Activated CD8-positive, alpha-beta T cell treated with anti-CD3 and anti-CD28 coated beads for 36 hours (primary cell): ENCODE measurements at regions of chr19 and their contacts with region 1.

Region 1: GRCh38 chr19:8462571-8462970 is 17.8 kb downstream of the HNRNPM start:
- DNase-seq: no peak
- ATAC-seq: no peak
- H3K4me3 Mint-ChIP-seq: no peak overlapping the region
- H3K27ac Mint-ChIP-seq: peak overlapping the region; percentile 11
- H3K4me1 Mint-ChIP-seq: peaks cover 39% of the 10 kb centered on the region
- H3K27me3 Mint-ChIP-seq: no peaks in the 10 kb centered on the region
- CTCF ChIP-seq: no peak

Region 2: GRCh38 chr19:8334458-8335342 is 127.9 kb before region 1 on chr19:
- CTCF ChIA-PET with region 1: no interaction called
- POLR2A ChIA-PET with region 1: no interaction called
- intact Hi-C with region 1: no loop called
- DNase-seq: peak; percentile 56
- ATAC-seq: peak; percentile 74
- H3K4me3 Mint-ChIP-seq: no peak overlapping the region
- H3K27ac Mint-ChIP-seq: no peak overlapping the region
- H3K4me1 Mint-ChIP-seq: peaks cover 9% of the 10 kb centered on the region
- H3K27me3 Mint-ChIP-seq: peaks cover 31% of the 10 kb centered on the region
- CTCF ChIP-seq: no peak

Region 3: GRCh38 chr19:8430650-8431049 is 31.9 kb before region 1 on chr19:
- CTCF ChIA-PET with region 1: no interaction called
- POLR2A ChIA-PET with region 1: no interaction called
- intact Hi-C with region 1: no loop called
- DNase-seq: no peak
- ATAC-seq: no peak
- H3K4me3 Mint-ChIP-seq: no peak overlapping the region
- H3K27ac Mint-ChIP-seq: no peak overlapping the region
- H3K4me1 Mint-ChIP-seq: peaks cover 3% of the 10 kb centered on the region
- H3K27me3 Mint-ChIP-seq: no peaks in the 10 kb centered on the region
- CTCF ChIP-seq: no peak

Region 4: GRCh38 chr19:8451885-8452284 is 10.7 kb before region 1 on chr19:
- CTCF ChIA-PET with region 1: interaction called, 12 read pairs
- POLR2A ChIA-PET with region 1: interaction called, 14 read pairs
- intact Hi-C with region 1: no loop called
- DNase-seq: no peak
- ATAC-seq: peak; percentile 53
- H3K4me3 Mint-ChIP-seq: no peak overlapping the region
- H3K27ac Mint-ChIP-seq: peak overlapping the region; percentile 48
- H3K4me1 Mint-ChIP-seq: peaks cover 79% of the 10 kb centered on the region
- H3K27me3 Mint-ChIP-seq: no peaks in the 10 kb centered on the region
- CTCF ChIP-seq: no peak

Region 5: DNA sequence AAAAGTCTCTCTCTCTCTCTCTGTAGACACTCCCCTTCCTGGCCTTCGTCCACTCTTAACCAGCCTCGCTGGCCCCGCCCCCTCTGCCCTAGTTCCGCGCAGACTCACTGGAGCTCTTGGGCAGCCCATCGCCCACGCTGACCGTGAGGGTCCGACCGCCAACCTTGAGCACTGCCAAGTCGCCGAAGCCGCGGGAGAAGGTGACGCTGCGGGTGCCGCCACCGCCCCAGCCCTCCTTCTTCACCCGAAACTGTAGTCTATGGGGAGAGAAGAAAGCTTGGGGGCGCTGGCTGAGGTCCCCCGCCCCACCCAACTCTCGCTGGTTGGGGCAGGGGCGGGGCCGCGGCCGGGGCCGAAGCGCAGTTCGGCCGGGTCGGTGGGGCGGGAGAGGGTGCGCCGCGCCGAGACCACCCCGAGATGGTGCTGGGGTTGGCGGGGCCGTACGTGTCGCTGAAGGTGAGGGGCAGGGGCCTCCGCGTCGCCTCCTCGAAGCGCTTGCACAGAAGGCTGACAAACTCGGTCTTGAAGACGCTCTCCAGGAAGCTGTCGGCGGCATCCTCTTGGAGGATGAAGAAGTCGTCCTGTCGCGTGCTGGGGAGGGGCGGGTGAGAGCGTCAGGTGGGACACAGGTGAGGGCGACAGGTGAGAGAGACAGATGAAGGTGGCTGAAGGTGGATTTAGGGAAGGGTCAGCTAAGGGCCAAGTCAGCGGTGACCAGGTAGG is 63.9 kb after region 1 on chr19:
- CTCF ChIA-PET with region 1: no interaction called
- POLR2A ChIA-PET with region 1: no interaction called
- intact Hi-C with region 1: no loop called
- DNase-seq: peak; percentile 40
- ATAC-seq: peak; percentile 38
- H3K4me3 Mint-ChIP-seq: no peak overlapping the region
- H3K27ac Mint-ChIP-seq: no peak overlapping the region
- H3K4me1 Mint-ChIP-seq: peaks cover 3% of the 10 kb centered on the region
- H3K27me3 Mint-ChIP-seq: no peaks in the 10 kb centered on the region
- CTCF ChIP-seq: no peak